ENCODE measurements at regions of chr15 and their contacts with region 1.

Region 1: DNA sequence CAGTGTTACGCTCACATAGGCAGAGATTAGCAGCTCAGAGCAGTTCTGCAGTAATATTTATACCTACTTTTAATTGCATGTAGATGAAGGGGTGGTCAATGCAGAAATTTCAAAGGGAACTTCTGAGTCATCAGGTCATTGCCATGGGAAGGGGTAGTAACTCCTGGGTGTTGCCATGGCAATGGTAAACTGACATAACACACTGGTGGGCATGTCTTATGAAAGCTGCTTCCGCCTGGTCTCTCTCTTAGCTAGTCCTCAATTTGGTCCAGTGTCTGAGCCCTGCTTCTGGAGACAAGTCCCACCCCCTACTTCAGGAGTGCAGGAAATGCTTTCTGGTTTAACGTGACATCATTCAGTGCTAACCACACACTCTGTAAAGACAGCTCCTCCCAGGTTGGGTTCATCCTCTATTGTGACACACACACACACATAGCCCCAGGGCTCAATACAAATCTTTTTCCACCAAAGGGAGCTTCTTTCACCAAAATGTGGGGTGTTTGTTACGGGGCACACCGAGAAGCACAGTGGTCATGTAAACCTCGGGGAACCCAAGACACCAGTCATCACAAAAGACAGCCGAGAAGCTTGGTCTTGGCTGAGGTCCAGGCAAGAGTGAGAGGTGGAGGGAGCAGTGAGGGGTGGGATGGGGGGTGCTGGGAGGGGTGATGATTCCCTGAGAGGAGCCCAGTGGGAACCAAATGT is 74.5 kb downstream of the TLE3 start:
- DNase-seq: no peak
- H3K4me3 ChIP-seq: no peak overlapping the region
- H3K27ac ChIP-seq: peak overlapping the region; percentile 47 to 73
- H3K4me1 ChIP-seq: peaks cover 4 to 26% of the 10 kb centered on the region in 2 donors
- H3K27me3 ChIP-seq: no peaks in the 10 kb centered on the region
- CTCF ChIP-seq: no peak

Region 2: DNA sequence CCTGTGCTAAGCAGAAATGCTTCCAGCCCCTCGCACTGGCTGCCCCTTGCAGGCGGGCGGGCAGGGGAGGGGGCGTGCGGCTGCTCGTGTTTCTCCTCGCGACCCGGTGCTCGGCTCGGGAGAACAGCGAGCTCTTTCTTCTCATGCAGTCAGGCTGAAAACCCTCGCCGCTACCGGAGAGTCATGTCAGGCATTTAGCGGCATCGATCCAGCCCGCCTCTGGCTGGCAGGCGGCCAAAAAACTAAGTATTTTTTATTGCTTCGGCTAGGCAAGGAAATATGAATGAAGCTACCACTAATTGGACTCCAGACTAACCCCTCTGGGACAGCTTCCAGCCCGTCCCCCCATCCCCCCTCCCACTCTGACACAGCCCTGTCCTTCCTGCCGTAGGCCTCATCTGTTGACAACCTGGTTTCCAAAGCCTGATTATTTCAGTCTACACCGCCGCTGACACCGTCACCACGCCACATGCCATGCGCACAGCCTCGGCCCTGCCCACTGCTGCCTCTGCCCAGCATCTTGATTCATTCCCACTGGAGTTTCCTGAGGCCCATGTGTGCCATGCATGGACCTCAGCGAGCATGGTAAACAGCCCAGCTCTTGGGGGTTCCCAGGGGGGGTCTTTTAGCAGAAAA is 39.2 kb after region 1 on chr15:
- intact Hi-C with region 1: loop called (anchors 2 kb)
- DNase-seq: peak in 1 of 2 donors; percentile 77
- H3K4me3 ChIP-seq: peak overlapping the region in 1 of 2 donors; percentile 4
- H3K27ac ChIP-seq: no peak overlapping the region
- H3K4me1 ChIP-seq: no peaks in the 10 kb centered on the region
- H3K27me3 ChIP-seq: no peaks in the 10 kb centered on the region
- CTCF ChIP-seq: no peak

Measured in ascending aorta (tissue), 2 donors.